Right ventricle myocardium superior (tissue), 1 donor: ENCODE measurements at regions of chr1 and their contacts with region 1.

Region 1: DNA sequence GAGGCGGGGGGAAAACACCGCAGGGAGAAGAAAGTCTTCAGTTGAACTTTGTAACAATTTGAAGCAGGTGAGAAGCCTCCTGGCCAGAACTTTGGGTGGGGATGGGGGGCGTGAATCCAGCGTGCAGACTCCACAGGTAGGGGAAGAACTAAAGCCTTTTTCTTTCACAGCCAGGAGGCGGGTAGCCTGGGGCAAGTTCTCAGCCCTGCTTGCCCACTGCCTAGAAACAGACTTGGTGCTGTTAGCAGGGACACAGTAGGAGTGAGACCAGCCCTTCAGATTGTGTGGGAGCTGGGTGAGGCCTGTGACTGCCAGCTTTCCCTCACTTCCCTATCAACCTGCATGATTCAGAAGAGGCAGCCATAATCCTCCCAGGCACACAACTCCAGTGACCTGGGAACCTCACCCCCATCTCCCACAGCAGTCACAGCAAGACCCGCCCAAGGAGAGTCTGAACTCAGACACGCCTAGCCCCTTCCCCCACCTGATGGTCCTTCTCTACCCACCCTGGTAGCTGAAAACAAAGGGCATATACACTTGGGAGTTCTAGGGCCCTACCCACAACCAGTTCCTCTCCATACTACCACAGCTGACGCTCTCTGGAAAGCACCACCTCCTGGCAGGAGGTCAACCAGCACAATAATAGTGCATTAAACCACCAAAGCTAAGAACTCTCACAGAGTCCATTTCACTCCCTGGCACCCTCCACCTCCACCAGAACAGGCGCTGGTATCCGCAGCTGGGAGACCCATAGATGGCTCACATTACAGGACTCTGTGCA is 83.5 kb upstream of the CDC42BPA start:
- DNase-seq: no peak
- ATAC-seq: no peak

Region 2: DNA sequence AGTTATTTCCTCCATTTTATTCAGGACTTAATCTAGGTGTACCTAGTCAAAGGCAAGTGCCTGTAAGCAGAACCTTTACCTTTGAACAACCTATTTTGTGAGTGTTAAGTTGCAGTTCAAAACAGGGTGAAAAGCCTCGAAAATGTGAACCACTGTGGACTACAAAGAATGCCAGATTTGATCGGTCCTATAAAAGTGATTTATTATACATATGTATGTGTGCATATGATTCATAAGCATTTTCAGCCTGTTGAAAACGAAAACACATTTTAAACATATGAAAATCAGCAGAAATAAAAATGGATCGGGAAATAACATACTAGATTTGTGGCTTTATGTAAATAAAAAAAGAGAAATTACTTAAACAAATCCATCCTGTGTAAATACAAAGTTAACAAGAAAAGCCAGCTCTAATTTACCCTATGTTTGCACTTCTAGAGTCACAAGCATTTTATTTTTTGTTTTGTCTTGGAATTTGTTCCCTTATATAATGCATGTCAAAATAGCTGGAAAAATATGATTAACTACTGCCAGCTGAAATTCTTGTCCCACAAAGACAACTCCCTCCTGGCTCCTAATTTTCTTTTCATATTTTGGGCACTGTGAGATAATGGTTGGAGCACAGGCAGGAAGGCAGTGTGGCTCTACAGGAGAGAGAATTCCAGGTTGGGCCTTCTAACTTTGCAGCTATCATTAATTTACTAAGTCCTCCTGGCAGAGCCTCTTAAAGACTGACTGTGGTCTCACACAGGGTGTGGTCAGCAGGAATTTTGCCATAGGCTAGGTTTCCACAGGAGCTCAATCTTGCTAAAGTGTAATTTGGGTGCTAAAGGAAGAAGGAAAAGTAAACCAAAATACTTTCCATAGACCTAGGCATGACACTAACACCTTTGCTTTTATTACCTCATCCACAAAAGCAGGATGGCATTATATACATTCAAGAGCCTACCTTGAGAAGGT is 13.3 kb before region 1 on chr1:
- intact Hi-C with region 1: loop called (anchors 2 kb)
- DNase-seq: no peak
- ATAC-seq: no peak